Right ventricle myocardium inferior (tissue), 1 donor: ENCODE measurements at regions of chr5 and their contacts with region 1.

Region 1: GRCh38 chr5:97400537-97400936 is 217.5 kb upstream of the RIOK2 start:
- DNase-seq: no peak
- ATAC-seq: no peak

Region 2: GRCh38 chr5:97266576-97266975 is 134.0 kb before region 1 on chr5:
- intact Hi-C with region 1: no loop called
- DNase-seq: peak; percentile 73
- ATAC-seq: peak; percentile 94

Region 3: GRCh38 chr5:97422678-97423077 is 22.1 kb after region 1 on chr5:
- intact Hi-C with region 1: loop called (anchors 1 kb)
- DNase-seq: no peak
- ATAC-seq: no peak